ENCODE measurements at regions of chr12 and their contacts with region 1.

Region 1: DNA sequence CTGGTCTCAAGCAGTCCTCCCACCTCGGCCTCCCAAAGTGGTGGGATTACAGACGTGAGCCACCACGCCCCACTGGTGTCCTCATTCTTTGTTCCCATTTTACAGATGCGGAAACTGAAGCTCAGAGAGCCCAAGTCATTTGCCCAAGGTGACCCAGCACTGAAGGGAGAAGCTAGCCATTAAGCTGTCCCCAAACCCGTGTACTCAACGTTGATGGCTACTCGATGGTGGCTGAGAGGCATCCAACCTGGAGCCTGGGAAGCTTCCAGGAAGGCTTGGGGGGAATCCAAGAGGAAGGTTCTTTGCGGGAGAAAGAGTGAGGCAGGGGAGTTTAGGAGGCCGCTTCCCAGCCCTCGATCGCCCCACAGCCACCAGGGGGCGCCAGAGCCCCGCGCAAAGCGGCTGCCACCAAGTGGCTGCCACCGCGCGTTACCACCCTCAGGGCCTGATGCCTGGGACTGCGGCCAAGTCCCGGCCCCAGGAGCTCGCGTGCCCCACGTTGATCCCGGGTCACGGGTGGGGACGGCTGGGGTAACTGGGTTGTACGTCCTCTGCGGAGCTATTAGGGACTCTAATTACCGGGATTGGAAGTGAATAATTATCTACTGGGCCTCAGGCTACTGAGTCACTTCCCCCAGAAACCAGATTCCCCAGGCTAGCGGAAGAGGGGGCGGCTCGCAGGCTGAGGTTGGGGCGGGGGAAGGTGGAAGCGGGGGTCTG is 8.8 kb upstream of the SH2B3 start:
- DNase-seq: peak; percentile 84 to 91
- ATAC-seq: peak; percentile 84 to 91 (median 88)
- H3K4me3 ChIP-seq: peak overlapping the region in 7 of 10 donors; percentile 19 to 46 (median 38)
- H3K27ac ChIP-seq: peak overlapping the region in 8 of 10 donors; percentile 26 to 74 (median 64)
- H3K4me1 ChIP-seq: peaks cover 0 to 55% (median 11%) of the 10 kb centered on the region in 9 donors
- H3K27me3 ChIP-seq: no peaks in the 10 kb centered on the region
- CTCF ChIP-seq: peak in 8 of 9 donors; percentile 99 to 100 (median 99)

Region 2: GRCh38 chr12:111287125-111287900 is 109.6 kb before region 1 on chr12:
- intact Hi-C with region 1: no loop called
- DNase-seq: no peak
- ATAC-seq: no peak
- H3K4me3 ChIP-seq: no peak overlapping the region
- H3K27ac ChIP-seq: no peak overlapping the region
- H3K4me1 ChIP-seq: no peaks in the 10 kb centered on the region
- H3K27me3 ChIP-seq: peaks cover 0 to 5% (median 0%) of the 10 kb centered on the region in 7 donors
- CTCF ChIP-seq: no peak

Region 3: GRCh38 chr12:111359231-111359913 is 37.5 kb before region 1 on chr12:
- intact Hi-C with region 1: no loop called
- DNase-seq: no peak
- ATAC-seq: no peak
- H3K4me3 ChIP-seq: no peak overlapping the region
- H3K27ac ChIP-seq: no peak overlapping the region
- H3K4me1 ChIP-seq: peaks cover 8 to 46% (median 34%) of the 10 kb centered on the region in 9 donors
- H3K27me3 ChIP-seq: no peaks in the 10 kb centered on the region
- CTCF ChIP-seq: no peak

Region 4: GRCh38 chr12:111451649-111452129 is 54.8 kb after region 1 on chr12:
- intact Hi-C with region 1: loop called (anchors 1 to 5 kb)
- DNase-seq: no peak
- ATAC-seq: peak in 4 of 8 donors; percentile 2 to 22 (median 10)
- H3K4me3 ChIP-seq: no peak overlapping the region
- H3K27ac ChIP-seq: peak overlapping the region in 6 of 10 donors; percentile 15 to 93 (median 84)
- H3K4me1 ChIP-seq: peaks cover 13 to 84% (median 63%) of the 10 kb centered on the region in 9 donors
- H3K27me3 ChIP-seq: no peaks in the 10 kb centered on the region
- CTCF ChIP-seq: peak; percentile 64 to 86 (median 79)

Region 5: GRCh38 chr12:111529424-111530368 is 132.8 kb after region 1 on chr12:
- intact Hi-C with region 1: loop called (anchors 1 to 10 kb)
- DNase-seq: peak; percentile 23 to 27
- ATAC-seq: peak in 2 of 8 donors; percentile 47 to 53
- H3K4me3 ChIP-seq: no peak overlapping the region
- H3K27ac ChIP-seq: no peak overlapping the region
- H3K4me1 ChIP-seq: peaks cover 0 to 6% (median 0%) of the 10 kb centered on the region in 9 donors
- H3K27me3 ChIP-seq: no peaks in the 10 kb centered on the region
- CTCF ChIP-seq: peak; percentile 42 to 79 (median 73)

Region 6: DNA sequence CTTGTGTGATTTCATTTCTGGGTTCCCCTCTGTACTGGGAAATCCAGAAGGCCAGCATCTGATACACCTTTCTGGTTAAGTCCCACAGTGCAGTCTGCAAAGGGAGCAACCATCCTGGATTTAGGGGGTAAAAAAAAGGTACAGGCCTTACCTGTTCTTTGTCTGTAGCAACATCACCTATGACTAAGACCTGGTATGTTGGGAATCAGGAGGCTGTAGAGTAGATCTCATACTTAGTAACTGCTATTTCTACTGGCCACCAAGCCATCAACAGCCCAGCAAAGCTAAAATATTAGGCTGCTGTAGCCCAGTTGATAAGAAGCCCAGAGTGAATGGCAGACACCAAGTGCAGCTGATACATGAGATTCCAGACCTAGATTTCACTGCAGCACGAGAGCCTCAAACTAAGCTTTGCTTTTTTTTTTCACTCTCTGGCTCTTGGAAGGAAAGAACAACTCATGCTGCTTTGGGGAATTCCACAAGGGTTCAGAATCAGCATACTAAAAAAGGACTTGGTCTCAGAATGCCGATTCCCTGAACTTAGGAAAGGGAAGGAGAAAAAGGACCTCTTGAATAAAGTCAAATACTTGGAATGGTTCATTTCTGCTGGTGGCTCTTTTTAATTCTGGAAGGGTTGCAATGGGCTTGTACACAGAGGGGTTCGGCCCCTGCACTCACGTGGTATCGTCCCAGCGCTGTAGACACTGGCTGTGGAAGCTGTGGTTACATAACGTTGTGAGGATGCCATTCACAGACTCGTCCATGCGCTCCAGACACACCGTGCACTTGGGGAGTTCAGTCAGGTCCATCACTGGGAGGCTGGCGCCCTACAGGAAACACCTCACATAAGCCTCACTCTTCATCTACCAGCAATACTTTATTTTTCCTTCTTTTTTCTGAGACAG is 268.3 kb after region 1 on chr12:
- intact Hi-C with region 1: loop called in 8 of 10 experiments (anchors 5 to 10 kb)
- DNase-seq: no peak
- ATAC-seq: no peak
- H3K4me3 ChIP-seq: no peak overlapping the region
- H3K27ac ChIP-seq: no peak overlapping the region
- H3K4me1 ChIP-seq: no peaks in the 10 kb centered on the region
- H3K27me3 ChIP-seq: no peaks in the 10 kb centered on the region
- CTCF ChIP-seq: no peak

Region 7: DNA sequence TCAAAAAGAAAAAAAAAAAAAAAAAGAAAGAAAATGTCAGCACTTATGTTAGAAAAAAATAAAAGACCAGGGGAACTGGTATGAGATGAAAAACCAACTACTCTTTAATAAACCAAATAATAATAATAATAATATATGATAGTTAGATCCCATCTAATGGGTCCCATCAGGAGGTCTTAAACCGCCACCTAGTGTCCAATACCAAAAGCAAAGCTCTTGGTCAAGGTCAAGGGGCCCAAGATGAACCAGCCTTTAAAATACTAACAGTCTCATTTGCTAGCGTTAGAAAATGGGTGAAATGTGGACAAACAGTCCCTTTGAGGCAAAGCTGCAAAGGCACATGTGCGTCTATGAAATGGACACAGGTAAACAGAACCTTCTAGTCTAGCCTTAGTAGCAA is 276.6 kb after region 1 on chr12:
- intact Hi-C with region 1: loop called in 8 of 10 experiments (anchors 5 to 10 kb)
- DNase-seq: no peak
- ATAC-seq: no peak
- H3K4me3 ChIP-seq: no peak overlapping the region
- H3K27ac ChIP-seq: peak overlapping the region in 1 of 10 donors; percentile 9
- H3K4me1 ChIP-seq: peaks cover 0 to 5% (median 0%) of the 10 kb centered on the region in 9 donors
- H3K27me3 ChIP-seq: no peaks in the 10 kb centered on the region
- CTCF ChIP-seq: peak; percentile 5 to 64 (median 51)

Measured in heart right ventricle (tissue), 16 donors.